ENCODE measurements at regions of chr2 and their contacts with region 1.

Region 1: DNA sequence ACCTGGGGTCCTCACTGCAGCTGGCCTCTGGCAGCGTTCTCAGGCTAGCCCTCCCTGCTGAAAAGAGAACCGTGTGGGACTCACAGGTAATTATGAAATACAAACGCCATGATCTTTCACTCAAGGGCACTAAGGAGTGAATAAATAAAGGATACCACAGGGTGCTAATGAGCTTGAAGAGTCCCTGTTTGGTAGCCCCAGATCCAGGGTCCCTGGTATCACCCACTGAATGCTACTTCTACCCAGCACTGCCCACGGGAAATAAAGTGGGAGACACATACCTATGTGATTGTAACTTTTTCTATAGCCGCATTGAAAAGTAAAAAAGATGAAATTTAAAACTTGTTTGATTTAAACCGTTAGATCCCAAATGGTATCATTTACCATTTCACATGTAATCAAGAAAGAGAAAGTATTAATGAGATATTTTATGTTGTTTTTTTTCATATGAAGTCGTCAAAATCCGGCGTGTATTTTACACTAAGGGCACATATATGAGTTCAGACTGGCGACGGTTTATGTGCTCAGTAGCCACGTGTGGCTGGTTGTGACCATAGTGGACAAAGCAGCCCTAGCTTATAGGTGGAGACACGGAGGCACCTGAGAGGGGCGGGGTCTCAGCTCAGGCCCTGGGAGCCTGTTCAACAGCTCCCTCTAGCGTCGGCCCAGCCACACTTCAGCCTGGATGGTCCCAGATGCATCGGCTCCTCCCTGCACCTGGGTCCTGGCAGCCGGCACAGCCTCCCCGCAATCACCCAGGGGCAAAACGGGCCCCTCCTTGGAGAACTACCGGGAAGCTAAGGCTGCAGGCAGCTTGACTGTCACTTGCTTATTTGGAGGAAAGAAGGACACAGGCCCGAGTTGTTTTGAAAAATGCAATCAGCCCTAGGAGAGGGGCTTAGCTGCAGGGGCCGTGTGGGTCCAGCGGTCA is 39.2 kb downstream of the ODC1 start:
- DNase-seq: peak; percentile 70 to 88 (median 81)
- ATAC-seq: peak; percentile 84 to 85
- H3K4me3 Mint-ChIP-seq: peak overlapping the region; percentile 60 to 87 (median 82)
- H3K27ac Mint-ChIP-seq: peak overlapping the region; percentile 47 to 96 (median 92)
- H3K4me1 Mint-ChIP-seq: peaks cover 28 to 61% (median 51%) of the 10 kb centered on the region in 4 donors
- H3K27me3 Mint-ChIP-seq: no peaks in the 10 kb centered on the region

Region 2: DNA sequence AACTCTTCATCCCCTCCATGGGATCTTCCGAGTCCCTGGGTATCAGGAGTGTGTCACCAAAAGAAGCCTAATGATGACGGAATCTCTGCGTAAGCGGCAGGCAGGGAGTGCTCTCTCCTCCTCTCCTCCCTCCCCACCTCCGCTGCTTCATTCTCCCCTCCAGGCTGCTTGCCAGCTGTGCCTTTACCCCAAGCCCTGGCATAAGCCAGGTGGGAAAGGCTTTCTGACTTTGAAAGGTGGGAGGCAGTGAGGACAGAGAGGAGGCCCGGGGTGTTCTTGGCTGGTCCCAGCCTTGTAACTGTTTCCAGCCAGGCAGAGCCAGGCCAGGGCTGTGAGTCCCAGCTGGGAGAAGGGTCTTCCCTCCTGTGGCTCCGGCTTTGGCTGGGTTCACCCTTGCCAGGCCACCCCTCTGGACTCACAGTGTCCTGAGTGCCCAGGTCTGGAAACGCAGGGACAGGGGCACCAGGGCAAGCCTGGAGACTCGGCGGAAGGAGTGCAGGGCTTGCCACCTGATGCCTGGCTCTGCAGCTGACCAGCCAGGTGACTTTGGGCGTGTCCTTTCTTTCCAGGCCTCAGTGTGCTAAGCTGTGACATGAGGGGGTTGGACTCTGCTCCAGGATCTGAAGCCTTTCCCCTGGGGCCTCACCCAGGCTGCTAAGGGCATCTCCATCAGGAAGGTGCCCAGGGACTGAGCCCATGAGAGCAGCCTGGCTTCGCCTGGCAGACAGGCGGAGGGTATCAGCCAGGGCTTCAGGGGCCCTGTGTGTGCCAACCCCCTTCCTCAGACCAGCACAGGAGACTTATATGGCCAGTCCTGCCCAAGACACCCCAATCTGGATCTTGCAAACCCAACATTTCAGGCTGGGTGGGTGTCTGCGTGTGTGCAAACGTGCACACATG is 139.0 kb before region 1 on chr2:
- POLR2A ChIA-PET with region 1: interaction called, 14 read pairs
- DNase-seq: peak in 1 of 10 donors; percentile 31
- ATAC-seq: no peak
- H3K4me3 Mint-ChIP-seq: no peak overlapping the region
- H3K27ac Mint-ChIP-seq: peak overlapping the region in 2 of 10 donors; percentile 56 to 81
- H3K4me1 Mint-ChIP-seq: peaks cover 2 to 17% (median 6%) of the 10 kb centered on the region in 4 donors
- H3K27me3 Mint-ChIP-seq: peaks cover 0 to 2% (median 0%) of the 10 kb centered on the region in 5 donors

Region 3: GRCh38 chr2:10302479-10303180 is 106.3 kb before region 1 on chr2 and contains the start of gene HPCAL1:
- POLR2A ChIA-PET with region 1: interaction called, 64 read pairs
- DNase-seq: peak; percentile 67 to 90 (median 84)
- ATAC-seq: peak; percentile 64 to 65
- H3K4me3 Mint-ChIP-seq: peak within 1 kb of the TSS; percentile 95 to 99 (median 97)
- H3K27ac Mint-ChIP-seq: peak within 1 kb of the TSS; percentile 84 to 96 (median 94)
- H3K4me1 Mint-ChIP-seq: peaks cover 45 to 72% (median 69%) of the 10 kb centered on the region in 4 donors
- H3K27me3 Mint-ChIP-seq: no peaks in the 10 kb centered on the region
- polyA plus RNA-seq, gene HPCAL1: 71.5 to 122 (median 98.2) TPM

Region 4: GRCh38 chr2:10331027-10331701 is 77.8 kb before region 1 on chr2:
- POLR2A ChIA-PET with region 1: interaction called, 27 read pairs
- DNase-seq: peak; percentile 56 to 78 (median 65)
- ATAC-seq: peak; percentile 44 to 57
- H3K4me3 Mint-ChIP-seq: peak overlapping the region; percentile 87 to 100 (median 92)
- H3K27ac Mint-ChIP-seq: peak overlapping the region; percentile 94 to 99 (median 98)
- H3K4me1 Mint-ChIP-seq: peaks cover 65 to 94% (median 85%) of the 10 kb centered on the region in 4 donors
- H3K27me3 Mint-ChIP-seq: no peaks in the 10 kb centered on the region

Region 5: DNA sequence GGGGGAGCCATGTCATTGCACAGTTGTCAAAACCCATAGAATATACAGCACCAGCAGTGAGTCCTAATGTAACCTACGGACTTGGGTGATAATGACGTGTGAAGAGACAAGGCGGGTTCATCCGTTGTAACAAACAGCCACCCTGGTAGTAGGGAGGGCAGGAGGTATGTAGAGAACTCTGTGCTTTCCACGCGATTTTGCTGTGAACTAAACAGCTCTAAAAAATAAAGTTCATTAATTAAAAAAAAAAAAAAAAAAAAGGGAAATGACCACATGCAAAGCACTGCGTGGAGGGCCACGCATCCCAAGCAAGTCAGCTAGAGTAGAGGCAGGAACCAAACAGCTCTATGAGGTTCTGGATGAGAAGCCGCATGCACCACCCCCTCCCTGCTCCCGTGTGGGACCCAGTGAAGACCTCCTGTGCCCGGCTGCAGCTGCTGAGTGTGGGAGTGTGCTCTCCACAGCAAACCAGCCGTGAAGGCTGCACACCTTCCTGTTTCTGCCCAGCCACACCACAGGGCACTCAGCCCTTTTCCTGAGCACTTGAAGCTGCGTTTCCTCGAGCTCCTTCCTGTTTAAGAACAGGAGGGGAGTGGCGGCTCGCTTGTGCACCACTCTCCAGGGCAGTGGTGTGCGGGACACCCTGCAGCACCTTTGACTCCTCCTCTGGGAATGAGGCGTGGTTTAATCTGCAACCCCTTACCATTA is 26.4 kb before region 1 on chr2:
- POLR2A ChIA-PET with region 1: interaction called, 17 read pairs
- DNase-seq: peak; percentile 23 to 82 (median 62)
- ATAC-seq: peak; percentile 86 to 95
- H3K4me3 Mint-ChIP-seq: peak overlapping the region; percentile 45 to 86 (median 74)
- H3K27ac Mint-ChIP-seq: peak overlapping the region; percentile 81 to 96 (median 91)
- H3K4me1 Mint-ChIP-seq: peaks cover 60 to 97% (median 96%) of the 10 kb centered on the region in 4 donors
- H3K27me3 Mint-ChIP-seq: no peaks in the 10 kb centered on the region

Region 6: GRCh38 chr2:10434886-10435819 is 26.2 kb after region 1 on chr2:
- POLR2A ChIA-PET with region 1: interaction called, 19 read pairs
- DNase-seq: peak; percentile 34 to 79 (median 70)
- ATAC-seq: peak; percentile 51 to 52
- H3K4me3 Mint-ChIP-seq: peak overlapping the region in 5 of 10 donors; percentile 18 to 53 (median 48)
- H3K27ac Mint-ChIP-seq: peak overlapping the region in 2 of 10 donors; percentile 30 to 57
- H3K4me1 Mint-ChIP-seq: peaks cover 12 to 29% (median 16%) of the 10 kb centered on the region in 4 donors
- H3K27me3 Mint-ChIP-seq: peaks cover 0 to 21% (median 3%) of the 10 kb centered on the region in 5 donors

Region 7: GRCh38 chr2:10575609-10576280 is 166.8 kb after region 1 on chr2:
- POLR2A ChIA-PET with region 1: no interaction called
- DNase-seq: no peak
- ATAC-seq: no peak
- H3K4me3 Mint-ChIP-seq: no peak overlapping the region
- H3K27ac Mint-ChIP-seq: no peak overlapping the region
- H3K4me1 Mint-ChIP-seq: peaks cover 3 to 19% (median 8%) of the 10 kb centered on the region in 4 donors
- H3K27me3 Mint-ChIP-seq: no peaks in the 10 kb centered on the region

Measured in naive thymus-derived CD8-positive, alpha-beta T cell (primary cell).